Uterus (tissue), 4 donors: ENCODE measurements at regions of chr3 and their contacts with region 1.

Region 1: DNA sequence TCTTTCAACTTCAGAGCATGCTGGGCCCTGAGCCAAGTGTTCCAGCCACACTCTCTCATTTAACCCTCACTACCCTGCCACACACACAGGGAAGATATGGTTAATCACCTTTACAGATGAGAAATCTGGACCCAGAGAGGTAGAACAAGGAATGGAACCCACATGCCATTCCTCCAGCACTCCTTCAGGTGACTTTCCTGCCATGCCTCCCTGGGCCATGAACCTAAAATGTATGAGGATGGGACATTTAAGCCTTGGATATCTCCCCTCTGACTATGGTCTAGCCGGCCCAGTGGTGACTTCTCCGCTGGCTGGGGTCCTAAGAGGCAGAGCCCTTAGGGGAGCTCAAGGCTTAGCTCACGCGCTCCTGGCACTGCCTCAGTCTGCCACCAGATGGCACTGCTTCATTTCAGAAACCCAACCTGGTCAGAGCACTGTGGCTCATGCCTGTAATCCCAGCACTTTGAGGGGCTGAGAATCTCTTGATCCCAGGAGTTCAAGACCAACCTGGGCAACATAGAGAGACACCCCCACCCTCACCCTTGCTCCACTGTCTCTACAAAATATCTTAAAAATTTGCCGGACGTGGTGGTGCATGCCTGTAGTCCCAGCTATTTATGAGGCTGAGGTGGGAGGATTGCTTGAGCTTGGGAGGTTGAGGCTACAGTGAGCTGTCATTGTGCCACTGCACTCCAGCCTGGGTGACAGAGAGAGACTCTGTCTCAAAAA is 2.2 kb upstream of the DCAF1 start:
- DNase-seq: peak; percentile 80 to 84
- H3K4me3 ChIP-seq: no peak overlapping the region
- H3K27ac ChIP-seq: peak overlapping the region; percentile 5 to 29
- H3K4me1 ChIP-seq: no peaks in the 10 kb centered on the region
- H3K27me3 ChIP-seq: no peaks in the 10 kb centered on the region
- CTCF ChIP-seq: peak; percentile 86 to 95 (median 93)
- POLR2A ChIP-seq: no peak

Region 2: DNA sequence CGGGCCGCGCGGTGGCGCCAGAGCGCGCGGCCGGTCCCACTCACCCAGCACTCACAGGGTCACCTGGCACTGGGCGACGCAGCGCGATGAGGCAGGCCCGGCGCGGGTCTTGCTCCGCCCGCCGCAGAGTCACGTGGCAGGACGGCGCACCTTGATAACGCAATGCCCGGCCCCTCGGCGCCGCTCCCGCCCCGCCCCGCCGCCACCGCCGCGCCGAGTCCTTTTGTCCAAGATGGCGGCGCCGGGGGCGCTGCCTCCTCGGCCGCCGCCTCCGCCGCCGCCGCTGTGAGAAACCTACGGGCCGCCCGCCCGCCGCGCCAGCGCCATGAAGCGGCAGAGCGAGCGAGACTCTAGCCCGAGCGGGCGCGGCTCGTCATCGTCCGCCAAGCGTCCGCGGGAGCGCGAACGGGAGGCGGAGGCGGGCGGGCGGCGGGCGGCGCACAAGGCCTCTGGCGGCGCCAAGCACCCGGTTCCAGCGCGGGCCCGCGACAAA is 110.9 kb before region 1 on chr3 and contains the start of gene RBM15B:
- intact Hi-C with region 1: loop called (anchors 5 kb)
- DNase-seq: peak; percentile 96 to 97
- H3K4me3 ChIP-seq: peak within 1 kb of the TSS; percentile 43 to 92
- H3K27ac ChIP-seq: peak within 1 kb of the TSS; percentile 80 to 93
- H3K4me1 ChIP-seq: peaks cover 0 to 23% of the 10 kb centered on the region in 2 donors
- H3K27me3 ChIP-seq: no peaks in the 10 kb centered on the region
- CTCF ChIP-seq: peak in 3 of 4 experiments; percentile 91 to 97 (median 94)
- POLR2A ChIP-seq: peak; percentile 32 to 71
- total RNA-seq, gene RBM15B: 21.2 to 38.9 (median 28.1) TPM

Region 3: DNA sequence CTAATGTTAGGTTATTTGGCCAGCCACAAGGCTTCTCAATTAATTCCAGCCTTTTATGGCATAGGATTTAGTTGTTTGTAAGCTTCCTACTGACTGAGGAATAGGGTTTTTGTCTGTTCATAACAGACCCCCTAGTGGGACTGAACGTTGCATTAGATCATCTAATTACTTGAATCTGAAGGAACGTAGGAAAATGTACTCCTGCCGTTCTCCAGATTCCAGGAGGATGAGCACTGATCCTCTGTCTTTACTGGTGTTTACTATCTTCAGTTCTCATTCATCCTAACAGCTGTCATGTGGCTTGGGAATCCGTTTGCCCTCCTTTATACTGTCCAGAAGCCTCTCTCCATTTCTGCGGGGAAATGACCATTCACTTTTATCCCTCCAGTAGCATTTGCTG is 89.2 kb after region 1 on chr3:
- intact Hi-C with region 1: no loop called
- DNase-seq: no peak
- H3K4me3 ChIP-seq: no peak overlapping the region
- H3K27ac ChIP-seq: no peak overlapping the region
- H3K4me1 ChIP-seq: no peaks in the 10 kb centered on the region
- H3K27me3 ChIP-seq: no peaks in the 10 kb centered on the region
- CTCF ChIP-seq: no peak
- POLR2A ChIP-seq: no peak

Region 4: DNA sequence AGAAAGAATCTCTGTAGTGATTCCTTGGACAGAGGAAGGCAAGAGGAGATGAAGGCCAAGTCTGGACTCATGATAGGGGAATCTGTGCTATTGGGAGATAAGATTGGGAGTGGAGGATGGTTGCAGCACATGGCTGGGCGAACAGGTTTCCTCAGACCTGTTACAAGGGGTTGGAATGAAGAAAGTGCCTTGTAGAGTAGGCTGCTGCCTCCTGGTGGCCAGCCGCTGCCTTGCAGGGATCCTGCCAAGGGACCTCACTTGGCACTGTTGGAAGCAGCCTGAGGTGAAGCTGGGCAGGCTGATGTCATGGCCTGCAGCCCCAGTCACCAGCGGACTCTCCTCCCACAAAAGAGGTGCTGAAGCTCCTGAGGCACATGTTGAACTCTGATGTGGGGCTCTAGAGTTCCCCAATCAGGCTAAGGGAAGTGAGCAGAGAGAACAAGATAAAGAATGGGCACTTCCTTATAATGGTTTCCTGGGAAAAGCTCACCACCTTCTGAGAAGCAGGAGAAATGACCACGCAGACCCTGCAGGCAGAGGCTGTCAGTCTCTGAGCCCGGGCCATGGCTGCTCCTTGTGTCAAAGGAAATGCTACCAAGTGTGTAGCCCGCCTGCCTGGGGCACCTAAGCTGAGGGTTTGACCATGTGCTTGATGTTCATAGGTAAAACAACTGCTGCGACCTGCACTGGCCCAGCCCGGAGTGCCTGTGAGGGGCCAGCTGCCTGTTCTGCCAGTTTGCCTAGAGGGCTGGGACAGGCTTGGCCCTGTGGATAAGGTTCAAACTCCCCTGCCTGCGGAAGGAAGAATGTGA is 167.4 kb after region 1 on chr3:
- intact Hi-C with region 1: loop called (anchors 5 kb)
- DNase-seq: peak; percentile 84
- H3K4me3 ChIP-seq: no peak overlapping the region
- H3K27ac ChIP-seq: peak overlapping the region in 1 of 2 donors; percentile 14
- H3K4me1 ChIP-seq: peaks cover 6 to 9% of the 10 kb centered on the region in 2 donors
- H3K27me3 ChIP-seq: no peaks in the 10 kb centered on the region
- CTCF ChIP-seq: peak; percentile 88 to 95 (median 90)
- POLR2A ChIP-seq: no peak